ENCODE measurements at regions of chr4 and their contacts with region 1.

Region 1: GRCh38 chr4:7987148-7987989 is 47.7 kb upstream of the AFAP1 start:
- DNase-seq: peak; percentile 76
- ATAC-seq: peak; percentile 68 to 81

Region 2: DNA sequence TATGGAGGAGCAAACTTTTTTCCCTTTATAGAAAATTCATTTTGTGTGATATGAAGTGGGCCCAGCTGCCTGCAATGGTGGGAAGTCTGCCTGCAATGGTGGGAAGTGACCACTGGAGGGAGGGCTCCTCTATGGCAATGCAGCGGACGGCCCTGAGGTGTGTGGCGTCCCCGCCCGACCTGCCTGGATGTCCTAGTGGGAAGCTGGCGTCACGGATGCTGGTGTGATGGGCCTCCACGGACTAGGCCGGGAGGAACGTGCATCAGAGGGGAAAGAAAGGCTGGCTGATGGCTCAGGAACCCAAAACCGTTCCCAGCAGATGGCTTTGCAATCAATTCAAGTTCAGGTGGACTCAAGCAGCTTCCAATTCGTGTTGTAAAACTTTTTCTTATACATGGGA is 225.6 kb before region 1 on chr4:
- intact Hi-C with region 1: loop called in 1 of 2 experiments (anchors 5 kb)
- DNase-seq: peak; percentile 89
- ATAC-seq: peak; percentile 78 to 85